ENCODE measurements at regions of chr4 and their contacts with region 1.

Region 1: DNA sequence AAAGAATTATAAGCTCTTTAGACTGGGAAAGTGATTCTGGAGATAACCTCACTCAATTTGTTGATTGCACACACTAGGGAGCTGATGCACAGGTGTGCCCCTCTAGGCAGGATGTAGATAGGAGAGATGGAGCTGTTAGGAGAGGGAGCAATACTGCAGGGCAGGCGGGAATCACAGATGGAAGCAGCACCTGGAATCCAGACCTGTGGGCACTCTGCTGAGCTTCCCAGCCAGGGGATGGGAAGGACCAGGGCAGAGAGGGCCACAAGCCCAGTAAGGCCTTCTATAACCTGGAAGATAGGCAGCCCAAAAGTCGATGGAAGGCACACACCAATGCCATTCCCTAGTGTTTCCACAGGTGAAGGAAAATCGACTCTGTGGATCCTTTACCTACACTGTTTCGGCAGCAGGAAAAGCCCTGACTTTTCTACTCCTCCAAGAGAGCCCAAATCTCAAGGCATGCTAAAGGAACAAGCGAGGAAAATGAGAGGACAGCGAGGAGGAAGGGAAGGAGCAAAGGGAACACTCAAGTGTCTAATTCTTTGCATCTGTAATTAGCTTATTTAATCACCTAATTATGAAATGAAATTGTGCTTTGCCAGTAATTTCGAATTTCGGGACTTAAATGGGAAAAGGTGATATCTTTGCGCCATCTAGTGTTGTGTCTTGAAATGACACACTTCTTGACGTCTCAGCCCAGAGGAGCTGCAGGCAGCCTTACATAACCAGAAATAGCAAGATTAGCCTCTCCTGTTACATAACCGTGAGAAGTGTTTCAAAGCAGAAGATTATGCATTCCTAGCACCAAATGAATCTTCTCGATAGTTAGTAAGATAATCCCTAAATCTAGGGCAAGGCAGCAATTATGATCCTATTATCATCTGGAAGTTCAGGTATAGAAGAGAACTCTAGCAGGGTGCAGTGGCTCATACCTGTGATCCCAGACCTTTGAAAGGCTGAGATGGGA is 31.0 kb upstream of the TLR3 start:
- DNase-seq: peak; percentile 74
- H3K4me3 ChIP-seq: no peak overlapping the region
- H3K27ac ChIP-seq: no peak overlapping the region
- H3K4me1 ChIP-seq: no peaks in the 10 kb centered on the region
- H3K27me3 ChIP-seq: peaks cover 30% of the 10 kb centered on the region
- CTCF ChIP-seq: peak; percentile 79

Region 2: DNA sequence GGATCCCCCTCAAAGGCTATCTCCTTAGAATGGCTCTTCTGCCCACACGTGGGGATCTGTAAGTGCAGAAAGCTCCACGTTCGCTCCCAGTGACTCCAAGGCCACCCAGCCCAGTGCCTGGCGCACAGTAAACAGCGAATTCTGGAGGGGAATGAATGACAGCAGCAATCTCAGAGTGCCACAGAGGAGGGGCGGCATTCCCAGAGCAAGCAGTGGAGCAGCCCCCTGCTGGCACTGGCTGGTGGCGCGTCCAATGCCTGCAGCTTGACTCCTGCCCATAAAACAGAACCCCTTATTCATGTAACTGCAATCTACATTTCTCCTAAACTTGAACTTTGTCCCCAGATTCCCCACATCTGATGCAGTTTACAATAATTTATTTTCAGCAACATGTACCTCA is 1026.6 kb before region 1 on chr4:
- CTCF ChIA-PET with region 1: no interaction called
- POLR2A ChIA-PET with region 1: no interaction called
- intact Hi-C with region 1: loop called (anchors 10 kb)
- DNase-seq: peak; percentile 45
- H3K4me3 ChIP-seq: no peak overlapping the region
- H3K27ac ChIP-seq: no peak overlapping the region
- H3K4me1 ChIP-seq: no peaks in the 10 kb centered on the region
- H3K27me3 ChIP-seq: peaks cover 68% of the 10 kb centered on the region
- CTCF ChIP-seq: peak; percentile 64

Region 3: GRCh38 chr4:185640811-185641675 is 396.9 kb before region 1 on chr4:
- CTCF ChIA-PET with region 1: interaction called, 20 read pairs
- POLR2A ChIA-PET with region 1: no interaction called
- intact Hi-C with region 1: loop called (anchors 5 kb)
- DNase-seq: peak; percentile 69
- H3K4me3 ChIP-seq: no peak overlapping the region
- H3K27ac ChIP-seq: no peak overlapping the region
- H3K4me1 ChIP-seq: no peaks in the 10 kb centered on the region
- H3K27me3 ChIP-seq: peaks cover 11% of the 10 kb centered on the region
- CTCF ChIP-seq: peak; percentile 60

Region 4: DNA sequence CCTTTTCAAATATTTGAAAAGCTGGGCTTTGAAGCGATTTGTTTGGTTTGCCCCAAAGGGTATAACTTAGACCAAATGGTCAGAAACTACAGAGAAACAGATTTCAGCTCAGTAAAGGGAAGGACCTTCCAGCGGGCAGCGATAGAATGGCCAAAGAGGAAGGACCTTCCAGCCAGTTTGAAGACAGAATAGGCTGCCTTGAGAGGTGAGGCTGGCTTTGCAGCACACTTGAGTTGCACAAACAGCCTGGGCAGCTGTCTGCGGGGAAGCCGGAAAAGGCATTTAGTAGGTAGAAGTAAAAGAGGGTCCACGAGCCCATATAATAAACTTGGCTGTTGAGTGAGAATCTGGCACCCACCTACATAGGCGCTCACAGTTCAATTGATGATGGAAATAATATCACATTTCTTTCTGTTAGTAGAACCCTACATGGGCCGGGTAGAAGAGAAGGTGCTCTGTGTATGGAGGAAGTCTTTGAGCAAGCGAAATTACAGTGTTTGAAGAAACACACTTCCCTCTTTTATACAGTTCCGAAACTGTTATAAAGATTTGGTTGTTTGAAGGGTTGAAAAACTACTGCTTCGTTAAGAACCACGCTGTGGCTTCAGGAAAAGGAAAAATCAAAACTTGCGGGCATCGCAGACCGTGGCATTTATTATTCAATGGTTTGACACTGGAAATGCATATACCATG is 151.0 kb before region 1 on chr4:
- CTCF ChIA-PET with region 1: no interaction called
- POLR2A ChIA-PET with region 1: no interaction called
- intact Hi-C with region 1: no loop called
- DNase-seq: no peak
- H3K4me3 ChIP-seq: no peak overlapping the region
- H3K27ac ChIP-seq: no peak overlapping the region
- H3K4me1 ChIP-seq: no peaks in the 10 kb centered on the region
- H3K27me3 ChIP-seq: no peaks in the 10 kb centered on the region
- CTCF ChIP-seq: no peak

Region 5: DNA sequence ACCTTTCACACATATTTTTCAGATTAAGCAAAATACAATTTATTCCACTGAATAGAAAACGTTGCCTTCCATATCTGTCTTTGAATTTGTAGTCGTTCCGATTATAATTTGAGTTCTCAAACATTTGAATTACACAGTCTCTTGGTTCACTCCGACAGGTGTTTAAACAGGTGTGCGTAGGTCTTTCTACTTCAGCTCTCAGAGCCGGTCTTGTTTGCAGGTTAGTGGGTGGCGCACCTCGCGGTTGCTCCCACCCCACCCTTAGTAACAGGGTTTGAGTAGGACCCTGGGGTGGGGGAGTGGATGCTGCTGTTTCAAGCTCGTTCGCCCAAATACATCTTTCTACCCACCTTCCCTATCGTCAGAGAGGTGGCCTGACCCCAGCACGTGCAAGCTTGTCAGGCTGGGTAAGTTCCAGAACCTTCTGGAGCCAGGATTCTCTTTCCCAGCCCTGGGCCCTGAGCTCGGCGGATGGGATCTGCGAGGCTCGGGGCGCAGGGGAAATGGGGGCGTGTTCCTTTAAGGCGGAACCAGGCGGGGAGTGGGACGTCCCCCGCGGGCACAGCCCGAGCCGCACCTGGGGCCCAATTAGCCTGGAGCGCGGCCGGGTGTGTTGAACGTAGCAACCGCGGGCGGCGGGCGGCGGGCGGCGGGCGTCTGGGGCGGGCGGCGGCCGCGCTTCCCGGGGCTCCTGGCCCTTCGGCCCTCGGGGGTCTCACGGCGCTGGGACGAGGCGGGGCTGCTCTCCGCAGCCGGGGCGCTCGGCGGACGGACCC is 66.3 kb after region 1 on chr4 and contains the start of gene FAM149A:
- CTCF ChIA-PET with region 1: no interaction called
- POLR2A ChIA-PET with region 1: no interaction called
- intact Hi-C with region 1: no loop called
- DNase-seq: peak; percentile 21
- H3K4me3 ChIP-seq: peak within 1 kb of the TSS; percentile 48
- H3K27ac ChIP-seq: no peak within 1 kb of the TSS
- H3K4me1 ChIP-seq: peaks cover 9% of the 10 kb centered on the region
- H3K27me3 ChIP-seq: peaks cover 27% of the 10 kb centered on the region
- CTCF ChIP-seq: no peak
- total RNA-seq, gene FAM149A: 0.90 and 2.4 TPM in 2 replicates

Region 6: DNA sequence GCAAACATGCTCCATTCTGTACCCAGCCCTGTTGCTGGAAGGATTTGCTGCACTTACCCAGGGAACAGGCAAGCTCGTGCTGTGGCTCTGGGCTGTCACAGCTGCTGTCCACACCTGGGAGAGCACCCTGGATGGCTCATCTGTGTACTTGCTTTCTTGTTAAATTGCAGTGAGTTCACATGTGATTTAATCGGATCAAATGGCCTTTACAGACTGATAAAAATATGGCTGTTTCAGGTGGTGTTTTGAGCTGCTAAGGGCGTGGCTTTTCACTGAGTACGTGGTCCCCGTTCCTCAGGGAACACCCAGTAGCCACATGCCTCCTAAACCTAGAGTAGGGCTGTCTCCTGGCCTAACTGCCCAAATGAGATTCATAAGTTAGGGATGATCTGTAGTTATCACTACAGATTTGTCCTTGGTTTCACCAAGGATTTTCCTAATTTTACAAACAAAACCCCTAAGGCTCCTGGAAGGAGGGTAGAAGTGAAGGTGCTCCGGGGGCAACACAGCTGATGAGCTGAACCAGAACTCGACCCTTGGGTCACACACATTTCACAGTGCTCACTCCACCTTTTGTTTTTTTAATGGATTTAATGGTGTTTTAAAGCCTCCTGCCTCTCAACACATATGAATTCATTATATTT is 203.0 kb after region 1 on chr4:
- CTCF ChIA-PET with region 1: no interaction called
- POLR2A ChIA-PET with region 1: no interaction called
- intact Hi-C with region 1: no loop called
- DNase-seq: no peak
- H3K4me3 ChIP-seq: no peak overlapping the region
- H3K27ac ChIP-seq: no peak overlapping the region
- H3K4me1 ChIP-seq: no peaks in the 10 kb centered on the region
- H3K27me3 ChIP-seq: no peaks in the 10 kb centered on the region
- CTCF ChIP-seq: no peak

Region 7: GRCh38 chr4:186643501-186644310 is 605.7 kb after region 1 on chr4:
- CTCF ChIA-PET with region 1: no interaction called
- POLR2A ChIA-PET with region 1: no interaction called
- intact Hi-C with region 1: no loop called
- DNase-seq: peak; percentile 37
- H3K4me3 ChIP-seq: no peak overlapping the region
- H3K27ac ChIP-seq: no peak overlapping the region
- H3K4me1 ChIP-seq: peaks cover 23% of the 10 kb centered on the region
- H3K27me3 ChIP-seq: no peaks in the 10 kb centered on the region
- CTCF ChIP-seq: no peak

Measured in A673 (cell line).